GM10248 (cell line): ENCODE measurements at regions of chr1 and their contacts with region 1.

Region 1: DNA sequence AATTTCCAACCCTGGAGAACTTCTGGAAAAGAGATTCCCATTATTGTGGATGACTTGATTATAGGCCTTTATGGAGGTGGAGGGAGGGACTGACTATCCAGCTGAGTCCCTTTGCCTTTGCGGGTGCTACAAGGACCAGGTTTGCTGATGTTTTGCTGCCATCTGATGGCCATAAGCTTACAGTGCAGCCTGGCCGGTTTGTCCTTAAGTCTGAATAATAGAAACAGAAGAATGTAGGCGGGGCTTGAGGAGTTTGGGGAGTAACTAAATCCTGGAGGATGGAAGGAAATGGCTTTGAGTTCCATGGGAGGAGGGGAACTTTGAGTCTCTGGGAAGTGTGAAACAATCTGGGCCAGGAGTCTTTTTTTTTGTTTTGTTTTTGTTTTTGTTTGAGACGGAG is 55.7 kb upstream of the CD1D start:
- DNase-seq: peak; percentile 80
- CTCF ChIP-seq: peak; percentile 96

Region 2: GRCh38 chr1:157963713-157964112 is 161.3 kb before region 1 on chr1:
- CTCF ChIA-PET with region 1: interaction called, 64 read pairs
- POLR2A ChIA-PET with region 1: no interaction called
- DNase-seq: peak; percentile 65
- CTCF ChIP-seq: peak; percentile 85

Region 3: GRCh38 chr1:157969697-157970485 is 155.1 kb before region 1 on chr1:
- CTCF ChIA-PET with region 1: interaction called, 64 read pairs
- POLR2A ChIA-PET with region 1: no interaction called
- DNase-seq: peak; percentile 27
- CTCF ChIP-seq: peak; percentile 34

Region 4: GRCh38 chr1:158095737-158096335 is 29.2 kb before region 1 on chr1:
- CTCF ChIA-PET with region 1: interaction called, 118 read pairs
- POLR2A ChIA-PET with region 1: no interaction called
- DNase-seq: peak; percentile 74
- CTCF ChIP-seq: peak; percentile 65

Region 5: GRCh38 chr1:158140764-158141192 is 15.8 kb after region 1 on chr1:
- CTCF ChIA-PET with region 1: interaction called, 13 read pairs
- POLR2A ChIA-PET with region 1: no interaction called
- DNase-seq: no peak
- CTCF ChIP-seq: no peak